Activated T-helper 2 cell treated with anti-CD3 and anti-CD28 coated beads, Interferon-gamma antibody, Interleukin-2, Interleukin-4, amounts not matched to agents 10 μg/mL and 5 μg/mL and 100 μg/mL, durations not matched to agents 14 hours and 24 hours and 36 hours (primary cell): ENCODE measurements at regions of chr1 and their contacts with region 1.

Region 1: GRCh38 chr1:179298952-179299351 is 5.4 kb downstream of the SOAT1 start:
- DNase-seq: peak; percentile 43
- H3K4me3 Mint-ChIP-seq: peak overlapping the region; percentile 13
- H3K27ac Mint-ChIP-seq: peak overlapping the region; percentile 38
- H3K4me1 Mint-ChIP-seq: peaks cover 52% of the 10 kb centered on the region
- H3K27me3 Mint-ChIP-seq: no peaks in the 10 kb centered on the region

Region 2: GRCh38 chr1:178174539-178174938 is 1124.4 kb before region 1 on chr1:
- intact Hi-C with region 1: no loop called
- DNase-seq: no peak
- H3K4me3 Mint-ChIP-seq: no peak overlapping the region
- H3K27ac Mint-ChIP-seq: no peak overlapping the region
- H3K4me1 Mint-ChIP-seq: no peaks in the 10 kb centered on the region
- H3K27me3 Mint-ChIP-seq: no peaks in the 10 kb centered on the region

Region 3: GRCh38 chr1:179322557-179322956 is 23.6 kb after region 1 on chr1:
- intact Hi-C with region 1: loop called (anchors 1 kb)
- DNase-seq: no peak
- H3K4me3 Mint-ChIP-seq: no peak overlapping the region
- H3K27ac Mint-ChIP-seq: no peak overlapping the region
- H3K4me1 Mint-ChIP-seq: peaks cover 22% of the 10 kb centered on the region
- H3K27me3 Mint-ChIP-seq: no peaks in the 10 kb centered on the region